ENCODE measurements at regions of chr2 and their contacts with region 1.

Region 1: DNA sequence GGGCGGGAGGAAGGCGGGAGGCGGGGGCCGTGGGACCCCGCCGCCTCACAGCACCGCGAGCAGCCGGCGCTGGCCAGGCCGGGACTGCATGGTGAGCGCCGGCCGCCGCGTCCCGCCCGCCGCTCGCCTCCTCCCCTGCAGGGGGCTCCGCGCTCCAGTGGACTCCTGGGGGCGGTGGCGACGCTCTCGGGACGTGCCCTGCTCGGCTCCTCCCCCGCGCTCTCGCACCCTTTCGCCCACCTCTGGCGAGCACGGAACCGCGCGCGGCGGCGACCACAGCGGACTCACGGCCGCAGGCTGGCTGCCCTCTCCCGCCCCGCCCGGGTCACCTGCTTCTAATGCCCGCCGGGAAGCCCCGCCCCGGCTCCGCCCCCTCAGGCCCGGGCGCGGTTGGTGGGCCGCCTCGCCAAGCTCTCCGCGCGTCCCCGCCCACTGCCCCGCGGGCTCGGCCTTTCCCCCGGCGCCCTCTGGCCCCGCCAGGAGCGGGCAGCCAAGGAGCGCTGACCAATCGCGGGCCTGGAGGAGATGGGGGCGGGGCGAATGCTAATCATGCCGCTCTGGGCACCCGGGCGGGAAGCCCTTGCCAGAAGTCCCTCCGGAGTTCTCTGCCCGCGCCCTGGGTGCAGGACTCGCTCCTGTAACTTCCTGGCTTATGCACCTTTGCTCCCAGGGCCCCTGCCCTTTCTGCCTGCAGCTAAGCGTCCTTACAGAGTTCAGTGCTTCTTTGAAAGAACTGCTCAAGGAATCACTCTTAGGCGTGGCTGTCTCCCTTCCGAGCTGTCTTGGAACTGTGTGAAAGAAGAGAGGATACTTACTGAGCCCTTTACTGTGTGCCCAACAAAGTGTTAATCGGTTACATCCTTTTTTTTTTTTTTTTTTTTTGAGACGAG is at the start of gene FZD5:
- DNase-seq: peak; percentile 96 to 99 (median 97)
- ATAC-seq: peak; percentile 90 to 96 (median 95)
- H3K4me3 ChIP-seq: peak within 1 kb of the TSS; percentile 58 to 85 (median 76)
- H3K27ac ChIP-seq: peak within 1 kb of the TSS; percentile 22 to 92 (median 77)
- H3K4me1 ChIP-seq: peaks cover 5 to 51% (median 27%) of the 10 kb centered on the region in 12 donors
- H3K27me3 ChIP-seq: no peaks in the 10 kb centered on the region
- CTCF ChIP-seq: peak; percentile 29 to 78 (median 63)
- POLR2A ChIP-seq: peak; percentile 30 to 97
- total RNA-seq, gene FZD5: 3.3 to 8.7 (median 4.5) TPM

Region 2: DNA sequence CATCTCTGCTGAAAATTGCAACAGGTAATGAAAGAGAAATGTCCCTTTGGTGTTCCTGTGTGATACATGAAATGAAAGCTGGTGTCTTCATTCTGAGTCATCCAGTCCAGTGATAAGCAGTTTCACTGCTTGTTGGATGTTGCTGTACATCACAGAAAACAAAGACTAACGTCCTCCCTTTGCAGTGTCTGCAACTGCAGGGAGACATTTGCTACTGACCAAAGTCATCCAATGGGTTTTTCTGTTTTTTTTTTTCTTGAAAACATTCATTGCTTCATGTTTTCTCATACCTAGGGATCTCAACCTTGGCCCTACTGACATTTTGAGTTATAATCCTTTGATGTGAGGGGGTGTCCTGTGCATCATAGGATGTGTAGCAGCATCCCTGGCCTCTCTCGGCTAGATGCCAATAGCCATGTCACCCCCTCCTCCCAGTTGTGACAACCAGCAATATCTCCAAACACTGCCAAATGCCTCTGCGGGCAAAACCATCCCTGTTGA is 63.5 kb after region 1 on chr2:
- intact Hi-C with region 1: loop called in 3 of 10 experiments (anchors 2 to 10 kb)
- DNase-seq: no peak
- ATAC-seq: no peak
- H3K4me3 ChIP-seq: no peak overlapping the region
- H3K27ac ChIP-seq: no peak overlapping the region
- H3K4me1 ChIP-seq: peaks cover 0 to 42% (median 18%) of the 10 kb centered on the region in 12 donors
- H3K27me3 ChIP-seq: no peaks in the 10 kb centered on the region
- CTCF ChIP-seq: no peak
- POLR2A ChIP-seq: no peak

Region 3: DNA sequence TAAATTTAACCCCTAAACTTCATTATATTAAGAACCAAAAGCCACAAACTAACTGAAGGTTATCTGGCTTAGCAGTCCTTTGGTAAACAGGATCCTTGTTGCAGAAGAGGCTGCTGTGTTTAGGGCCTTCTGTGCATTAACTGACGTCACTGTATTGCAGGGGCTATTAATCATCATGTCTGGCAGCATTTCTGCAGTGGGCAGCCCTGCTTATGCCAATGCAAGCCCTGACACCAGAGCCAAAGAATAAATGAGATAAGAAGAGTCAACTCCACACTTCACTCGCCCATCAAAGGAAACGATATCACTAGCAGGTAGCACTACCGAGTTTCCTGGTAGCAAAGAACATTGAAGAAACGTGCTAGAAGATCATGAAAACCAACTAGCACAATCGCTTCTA is 144.9 kb after region 1 on chr2:
- intact Hi-C with region 1: no loop called
- DNase-seq: no peak
- ATAC-seq: peak in 3 of 4 donors; percentile 20 to 52 (median 33)
- H3K4me3 ChIP-seq: no peak overlapping the region
- H3K27ac ChIP-seq: no peak overlapping the region
- H3K4me1 ChIP-seq: peaks cover 0 to 8% (median 0%) of the 10 kb centered on the region in 12 donors
- H3K27me3 ChIP-seq: no peaks in the 10 kb centered on the region
- CTCF ChIP-seq: no peak
- POLR2A ChIP-seq: no peak

Region 4: GRCh38 chr2:207974216-207974605 is 204.4 kb after region 1 on chr2:
- intact Hi-C with region 1: loop called (anchors 1 to 5 kb)
- DNase-seq: no peak
- ATAC-seq: peak in 2 of 4 donors; percentile 28 to 53
- H3K4me3 ChIP-seq: no peak overlapping the region
- H3K27ac ChIP-seq: no peak overlapping the region
- H3K4me1 ChIP-seq: peaks cover 0 to 19% (median 7%) of the 10 kb centered on the region in 12 donors
- H3K27me3 ChIP-seq: no peaks in the 10 kb centered on the region
- CTCF ChIP-seq: no peak
- POLR2A ChIP-seq: no peak

Region 5: DNA sequence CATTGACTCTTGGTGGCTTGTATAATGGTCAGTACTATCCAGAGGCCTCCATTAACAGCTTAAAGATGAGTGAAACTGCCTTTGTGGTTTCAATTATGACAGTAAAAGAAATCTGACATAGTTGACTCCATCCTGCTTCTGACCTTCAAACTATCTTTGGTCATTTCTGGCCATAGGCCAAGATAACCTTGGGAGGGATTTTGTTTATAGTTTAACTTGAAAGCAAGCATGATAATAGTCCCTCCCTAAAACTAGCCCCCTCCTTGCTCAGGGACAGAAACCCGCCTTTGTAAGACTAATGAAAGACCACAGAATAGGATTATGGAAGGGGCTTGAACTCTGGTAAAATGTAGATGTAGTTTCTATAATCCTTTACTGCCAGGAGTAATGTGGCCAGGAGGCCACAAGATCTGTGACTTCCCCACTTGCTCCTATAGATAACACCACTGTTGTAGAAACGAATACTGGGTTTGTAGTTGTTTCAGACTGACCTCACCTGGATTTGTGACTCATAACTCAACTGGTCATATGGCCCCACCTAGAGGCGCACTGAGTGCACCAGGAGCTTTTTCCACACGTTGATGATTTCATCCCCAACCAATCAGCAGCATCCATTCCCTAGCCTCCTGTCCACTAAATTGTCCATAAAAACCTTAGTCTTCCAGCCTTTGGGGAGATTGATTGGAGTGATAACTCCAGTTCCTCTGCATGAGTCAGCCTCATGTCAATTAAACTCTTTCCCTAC is 264.1 kb after region 1 on chr2:
- intact Hi-C with region 1: loop called in 3 of 10 experiments (anchors 5 kb)
- DNase-seq: no peak
- ATAC-seq: peak; percentile 32 to 75 (median 68)
- H3K4me3 ChIP-seq: no peak overlapping the region
- H3K27ac ChIP-seq: no peak overlapping the region
- H3K4me1 ChIP-seq: peaks cover 0 to 13% (median 0%) of the 10 kb centered on the region in 12 donors
- H3K27me3 ChIP-seq: no peaks in the 10 kb centered on the region
- CTCF ChIP-seq: peak; percentile 13 to 57 (median 40)
- POLR2A ChIP-seq: no peak